AG04449 (cell line): ENCODE measurements at regions of chr1 and their contacts with region 1.

Region 1: GRCh38 chr1:207868774-207869721 is 41.9 kb downstream of the CD34 start:
- DNase-seq: no peak
- H3K4me3 ChIP-seq: peak overlapping the region; percentile 67
- CTCF ChIP-seq: peak; percentile 76

Region 2: GRCh38 chr1:206636671-206637070 is 1232.4 kb before region 1 on chr1:
- CTCF ChIA-PET with region 1: no interaction called
- POLR2A ChIA-PET with region 1: no interaction called
- DNase-seq: no peak
- H3K4me3 ChIP-seq: peak overlapping the region; percentile 41
- CTCF ChIP-seq: no peak

Region 3: DNA sequence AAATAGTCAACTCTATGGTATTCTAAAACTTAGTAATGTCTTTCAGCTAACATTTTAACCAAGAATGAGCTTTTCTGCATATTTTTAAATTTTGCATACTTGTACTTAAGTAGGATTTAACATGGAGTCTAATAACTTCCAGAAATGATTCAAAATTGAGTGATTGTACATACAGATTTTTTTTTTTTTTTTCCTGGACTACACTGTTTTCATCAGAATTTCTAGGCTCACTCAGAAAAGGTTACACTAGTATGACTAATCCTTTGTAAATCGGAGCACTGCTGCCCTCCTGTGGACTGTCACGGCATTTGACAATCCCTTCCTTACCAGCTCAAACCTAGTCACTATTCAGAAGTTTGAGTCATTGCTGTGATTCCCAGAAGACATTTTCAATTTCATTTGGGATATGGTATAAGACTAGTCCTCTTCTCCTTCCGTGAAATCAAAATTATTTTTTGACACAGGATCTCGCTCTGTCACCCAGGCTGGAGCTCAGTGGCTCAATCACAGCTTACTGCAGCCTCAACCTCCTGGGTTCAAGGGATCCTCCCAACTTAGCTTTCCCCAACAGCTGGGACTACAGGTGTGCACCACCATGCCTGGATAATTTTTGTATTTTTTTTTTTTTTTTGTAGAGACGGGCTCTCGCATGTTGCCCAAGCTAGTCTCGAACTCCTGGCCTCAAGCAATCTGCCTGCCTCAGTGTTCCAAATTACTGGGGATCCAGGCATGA is 71.7 kb before region 1 on chr1:
- CTCF ChIA-PET with region 1: interaction called, 11 read pairs
- POLR2A ChIA-PET with region 1: no interaction called
- DNase-seq: peak; percentile 44
- H3K4me3 ChIP-seq: no peak overlapping the region
- CTCF ChIP-seq: peak; percentile 71

Region 4: DNA sequence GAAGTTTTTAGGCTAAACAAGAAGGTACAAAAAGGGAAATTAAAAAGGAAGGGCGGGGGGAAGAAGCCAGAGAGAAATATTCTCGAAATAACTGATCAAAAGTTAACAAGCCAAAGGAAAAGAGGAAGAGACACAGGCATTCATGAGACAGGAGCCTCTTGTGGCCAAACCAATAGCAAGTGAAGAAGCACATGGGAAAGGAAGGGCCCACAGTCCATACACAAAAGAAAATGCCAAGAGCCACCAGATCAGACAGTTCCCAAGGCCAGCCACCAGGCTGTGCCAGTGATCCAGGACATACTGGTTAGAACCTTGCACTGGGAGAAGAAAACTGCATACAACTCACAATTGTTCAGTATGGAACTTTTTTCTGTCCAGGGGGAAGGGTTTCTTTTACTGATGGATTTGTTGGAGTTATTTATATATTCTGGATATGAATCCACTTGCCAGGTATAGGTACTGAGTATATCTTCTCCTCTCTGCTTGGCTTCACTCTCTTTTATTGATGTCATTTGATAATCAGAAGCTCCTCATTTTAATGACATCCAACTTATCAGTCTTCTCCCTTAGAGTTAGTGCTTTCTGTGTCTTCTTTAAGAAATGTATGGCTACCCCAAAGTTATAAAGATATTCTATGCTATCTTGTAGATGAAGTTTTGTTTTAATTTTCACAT is 40.4 kb before region 1 on chr1:
- CTCF ChIA-PET with region 1: interaction called, 547 read pairs
- POLR2A ChIA-PET with region 1: no interaction called
- DNase-seq: no peak
- H3K4me3 ChIP-seq: no peak overlapping the region
- CTCF ChIP-seq: peak; percentile 77

Region 5: DNA sequence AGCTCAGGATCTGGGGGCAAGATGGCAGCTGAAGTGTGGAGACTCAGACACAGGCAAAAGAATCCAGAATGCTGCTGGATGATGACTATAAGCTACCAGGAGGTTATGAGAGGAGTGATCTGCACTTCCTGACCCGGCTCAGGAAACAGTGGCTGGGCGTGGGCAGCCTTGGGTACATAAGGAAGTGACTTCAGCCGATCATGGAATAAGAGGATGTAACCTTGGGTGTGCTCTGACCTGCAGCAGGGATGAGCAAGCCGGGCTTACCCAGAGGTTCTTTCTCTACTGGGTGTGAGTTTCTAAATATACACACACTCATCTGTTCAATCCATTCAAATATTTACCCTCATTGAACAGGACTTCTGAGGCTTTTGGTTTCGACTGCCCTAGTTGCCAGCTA is 20.8 kb before region 1 on chr1:
- CTCF ChIA-PET with region 1: interaction called, 547 read pairs
- POLR2A ChIA-PET with region 1: no interaction called
- DNase-seq: no peak
- H3K4me3 ChIP-seq: no peak overlapping the region
- CTCF ChIP-seq: no peak

Region 6: GRCh38 chr1:207853372-207853757 is 15.7 kb before region 1 on chr1:
- CTCF ChIA-PET with region 1: interaction called, 44 read pairs
- POLR2A ChIA-PET with region 1: no interaction called
- DNase-seq: no peak
- H3K4me3 ChIP-seq: no peak overlapping the region
- CTCF ChIP-seq: no peak

Region 7: GRCh38 chr1:207858806-207859205 is 10.2 kb before region 1 on chr1:
- CTCF ChIA-PET with region 1: interaction called, 44 read pairs
- POLR2A ChIA-PET with region 1: no interaction called
- DNase-seq: no peak
- H3K4me3 ChIP-seq: no peak overlapping the region
- CTCF ChIP-seq: no peak